Activated naive CD4-positive, alpha-beta T cell treated with anti-CD3 and anti-CD28 coated beads for 36 hours (primary cell): ENCODE measurements at regions of chr7 and their contacts with region 1.

Region 1: GRCh38 chr7:124152859-124153692 is 120.2 kb upstream of the TMEM229A start:
- DNase-seq: no peak
- H3K4me3 Mint-ChIP-seq: no peak overlapping the region
- H3K27ac Mint-ChIP-seq: no peak overlapping the region
- H3K4me1 Mint-ChIP-seq: no peaks in the 10 kb centered on the region
- H3K27me3 Mint-ChIP-seq: no peaks in the 10 kb centered on the region

Region 2: DNA sequence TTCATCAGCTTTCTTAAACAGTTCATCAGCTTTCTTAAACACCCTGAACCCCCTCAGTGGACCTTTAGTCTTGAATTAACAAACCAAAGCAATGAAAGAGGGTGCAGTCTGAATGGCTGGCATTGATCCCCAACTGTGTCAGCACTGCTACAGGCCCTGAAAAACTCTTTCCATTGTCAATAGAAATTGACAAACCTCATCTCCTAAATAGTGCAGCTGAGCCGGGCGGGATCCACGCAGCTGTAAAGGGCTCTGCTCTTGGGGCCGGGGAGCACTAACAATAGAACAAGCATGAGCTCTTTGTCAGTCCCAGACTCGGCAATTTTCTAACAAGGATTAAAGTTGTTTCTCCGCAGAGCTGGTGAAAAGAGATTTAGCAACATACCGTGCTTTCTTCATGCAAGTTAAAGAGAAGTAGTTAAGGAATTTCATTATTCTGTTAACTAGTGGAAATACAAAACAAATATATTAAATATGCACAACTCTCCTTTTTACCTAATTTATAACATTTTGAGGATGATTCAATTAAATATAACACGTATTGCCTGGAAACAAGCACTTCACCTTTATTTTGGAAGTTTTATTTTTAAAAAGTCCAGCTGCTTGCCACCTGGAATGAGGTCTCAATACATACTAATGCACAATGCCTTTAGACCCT is 1823.8 kb before region 1 on chr7:
- CTCF ChIA-PET with region 1: no interaction called
- intact Hi-C with region 1: no loop called
- DNase-seq: no peak
- H3K4me3 Mint-ChIP-seq: no peak overlapping the region
- H3K27ac Mint-ChIP-seq: no peak overlapping the region
- H3K4me1 Mint-ChIP-seq: no peaks in the 10 kb centered on the region
- H3K27me3 Mint-ChIP-seq: no peaks in the 10 kb centered on the region

Region 3: GRCh38 chr7:123499211-123499970 is 653.7 kb before region 1 on chr7:
- CTCF ChIA-PET with region 1: no interaction called
- intact Hi-C with region 1: loop called (anchors 5 kb)
- DNase-seq: no peak
- H3K4me3 Mint-ChIP-seq: no peak overlapping the region
- H3K27ac Mint-ChIP-seq: no peak overlapping the region
- H3K4me1 Mint-ChIP-seq: no peaks in the 10 kb centered on the region
- H3K27me3 Mint-ChIP-seq: peaks cover 16% of the 10 kb centered on the region

Region 4: DNA sequence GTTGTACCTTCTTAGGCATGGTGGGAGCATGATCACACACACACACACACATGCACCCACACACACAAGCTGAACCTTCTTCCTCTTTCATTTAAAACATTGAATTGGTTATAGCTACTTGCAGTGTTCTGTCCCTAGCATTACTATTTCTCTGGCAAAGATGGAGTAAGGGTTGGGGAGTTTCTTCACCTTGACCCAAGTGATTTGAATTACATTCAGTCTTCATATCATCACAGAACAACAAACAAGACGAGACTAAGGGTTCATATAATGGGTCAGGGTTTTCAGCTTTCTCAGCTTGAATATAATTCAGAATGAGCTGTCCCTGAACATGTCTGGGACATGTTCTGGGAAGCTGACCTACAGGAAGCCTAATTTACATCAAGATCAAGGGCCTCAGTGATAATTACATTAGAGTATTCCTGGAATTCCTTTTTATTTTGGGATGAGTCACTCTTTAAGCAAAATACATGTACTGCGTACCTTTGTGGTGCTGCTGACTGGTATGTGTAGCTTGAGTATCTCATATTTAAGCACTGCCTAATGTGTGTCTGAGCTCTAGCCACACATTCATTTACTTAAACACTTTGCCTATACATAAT is 93.3 kb after region 1 on chr7:
- CTCF ChIA-PET with region 1: no interaction called
- intact Hi-C with region 1: no loop called
- DNase-seq: no peak
- H3K4me3 Mint-ChIP-seq: no peak overlapping the region
- H3K27ac Mint-ChIP-seq: no peak overlapping the region
- H3K4me1 Mint-ChIP-seq: no peaks in the 10 kb centered on the region
- H3K27me3 Mint-ChIP-seq: no peaks in the 10 kb centered on the region

Region 5: GRCh38 chr7:124784879-124785818 is 632.1 kb after region 1 on chr7:
- CTCF ChIA-PET with region 1: no interaction called
- intact Hi-C with region 1: loop called (anchors 1 kb)
- DNase-seq: peak; percentile 32
- H3K4me3 Mint-ChIP-seq: no peak overlapping the region
- H3K27ac Mint-ChIP-seq: no peak overlapping the region
- H3K4me1 Mint-ChIP-seq: no peaks in the 10 kb centered on the region
- H3K27me3 Mint-ChIP-seq: peaks cover 28% of the 10 kb centered on the region